Pancreas (tissue), 10 donors: ENCODE measurements at regions of chr4 and their contacts with region 1.

Region 1: DNA sequence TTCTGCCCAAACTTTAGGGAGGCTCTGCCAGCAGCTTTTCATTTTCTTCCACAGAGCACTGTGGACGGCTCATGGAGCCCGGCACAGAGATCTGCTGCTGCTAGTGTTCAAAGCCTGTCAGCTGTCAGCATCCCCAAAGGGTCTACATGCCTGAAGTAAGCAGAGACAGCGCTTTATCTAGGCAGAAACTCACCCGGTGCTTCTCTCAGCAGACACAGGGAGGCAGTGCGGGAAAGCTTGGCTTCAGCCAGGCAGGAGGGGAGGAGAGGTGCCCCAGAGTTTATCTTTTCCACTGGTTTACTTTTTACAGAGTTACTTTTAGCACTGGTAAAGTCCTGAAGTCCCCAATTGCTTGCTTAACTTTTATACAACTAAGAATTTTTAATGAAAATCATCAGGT is 339.3 kb downstream of the NKX6-1 start:
- DNase-seq: no peak
- ATAC-seq: peak in 2 of 4 donors; percentile 42 to 63
- H3K4me3 ChIP-seq: no peak overlapping the region
- H3K27ac ChIP-seq: no peak overlapping the region
- H3K4me1 ChIP-seq: no peaks in the 10 kb centered on the region
- H3K27me3 ChIP-seq: no peaks in the 10 kb centered on the region
- CTCF ChIP-seq: no peak

Region 2: DNA sequence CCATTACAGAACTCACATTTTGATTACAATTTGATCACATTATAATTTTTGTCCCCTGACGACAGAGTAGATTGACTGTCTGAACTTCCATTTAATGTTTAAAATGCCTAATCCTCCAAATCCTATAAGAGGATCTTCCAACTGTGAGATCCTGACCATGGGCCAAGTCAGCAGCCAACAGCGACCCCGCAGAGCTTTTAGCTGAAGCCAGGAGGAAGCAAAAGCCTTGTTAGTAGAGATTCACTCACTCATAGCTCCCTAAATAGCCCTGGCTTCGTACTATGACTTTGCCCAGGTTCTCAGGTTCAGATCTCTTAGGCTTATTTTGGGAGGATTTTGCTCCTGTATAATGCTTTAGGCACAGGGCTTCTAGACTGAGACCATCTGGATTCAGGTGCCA is 73.8 kb before region 1 on chr4:
- intact Hi-C with region 1: no loop called
- DNase-seq: no peak
- ATAC-seq: no peak
- H3K4me3 ChIP-seq: no peak overlapping the region
- H3K27ac ChIP-seq: no peak overlapping the region
- H3K4me1 ChIP-seq: no peaks in the 10 kb centered on the region
- H3K27me3 ChIP-seq: no peaks in the 10 kb centered on the region
- CTCF ChIP-seq: no peak

Region 3: DNA sequence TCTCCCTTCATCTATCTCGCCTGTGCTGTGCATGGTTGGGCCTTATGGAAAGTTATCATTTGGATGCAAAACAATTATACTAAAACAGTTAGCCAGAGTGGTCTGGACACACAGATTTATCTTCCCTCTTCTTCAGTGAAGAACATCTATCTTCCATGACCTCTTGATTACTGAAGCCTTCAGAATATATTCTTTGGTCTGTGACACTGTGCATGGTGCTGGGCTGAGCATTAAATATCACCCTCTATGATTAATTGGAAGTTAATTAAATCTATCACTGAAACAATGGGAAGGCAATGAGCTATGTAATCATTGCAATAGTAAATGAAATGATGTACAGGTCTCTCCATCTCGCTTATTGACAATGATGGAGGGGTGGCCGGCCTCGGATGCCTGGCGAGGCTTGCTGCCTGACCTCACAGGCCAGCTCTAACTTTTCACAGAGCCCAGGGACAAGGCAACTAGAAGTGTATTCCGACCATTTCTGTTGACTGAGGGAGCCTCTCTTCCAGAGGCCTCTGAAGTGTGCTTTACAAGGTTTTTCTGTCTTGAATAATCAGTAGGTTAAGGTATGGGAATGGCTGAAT is 152.8 kb after region 1 on chr4:
- intact Hi-C with region 1: no loop called
- DNase-seq: no peak
- ATAC-seq: no peak
- H3K4me3 ChIP-seq: no peak overlapping the region
- H3K27ac ChIP-seq: no peak overlapping the region
- H3K4me1 ChIP-seq: no peaks in the 10 kb centered on the region
- H3K27me3 ChIP-seq: no peaks in the 10 kb centered on the region
- CTCF ChIP-seq: no peak

Region 4: DNA sequence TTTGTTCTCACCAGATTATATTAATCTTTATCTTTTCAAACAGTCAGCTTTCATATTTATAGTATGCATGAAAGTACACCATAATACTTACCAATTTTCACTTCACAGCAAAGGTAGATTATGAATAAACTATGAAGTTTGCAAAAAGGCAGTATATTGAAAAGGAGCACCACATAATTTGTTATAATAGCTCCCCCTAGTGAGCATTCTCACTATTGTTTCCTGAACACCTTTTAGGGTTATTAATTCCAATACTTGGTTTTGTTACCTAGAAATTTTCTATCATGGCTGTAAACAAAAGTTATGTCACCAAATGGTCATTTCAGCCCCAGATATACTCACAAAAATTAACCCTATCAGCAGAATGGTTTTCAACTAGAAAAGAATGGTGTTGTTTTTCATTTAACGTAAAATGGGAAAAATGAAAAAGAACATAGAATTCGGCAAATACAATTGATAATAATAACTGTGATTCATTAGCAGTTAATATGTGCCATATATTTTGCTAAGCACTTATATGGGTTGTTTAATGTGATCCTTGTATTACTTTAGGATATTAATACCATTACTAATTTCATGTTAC is 369.5 kb after region 1 on chr4:
- intact Hi-C with region 1: loop called in 1 of 3 experiments (anchors 10 kb)
- DNase-seq: no peak
- ATAC-seq: peak in 2 of 4 donors; percentile 50 to 65
- H3K4me3 ChIP-seq: no peak overlapping the region
- H3K27ac ChIP-seq: no peak overlapping the region
- H3K4me1 ChIP-seq: no peaks in the 10 kb centered on the region
- H3K27me3 ChIP-seq: no peaks in the 10 kb centered on the region
- CTCF ChIP-seq: peak; percentile 10 to 54 (median 37)